ENCODE measurements at regions of chr19 and their contacts with region 1.

Region 1: DNA sequence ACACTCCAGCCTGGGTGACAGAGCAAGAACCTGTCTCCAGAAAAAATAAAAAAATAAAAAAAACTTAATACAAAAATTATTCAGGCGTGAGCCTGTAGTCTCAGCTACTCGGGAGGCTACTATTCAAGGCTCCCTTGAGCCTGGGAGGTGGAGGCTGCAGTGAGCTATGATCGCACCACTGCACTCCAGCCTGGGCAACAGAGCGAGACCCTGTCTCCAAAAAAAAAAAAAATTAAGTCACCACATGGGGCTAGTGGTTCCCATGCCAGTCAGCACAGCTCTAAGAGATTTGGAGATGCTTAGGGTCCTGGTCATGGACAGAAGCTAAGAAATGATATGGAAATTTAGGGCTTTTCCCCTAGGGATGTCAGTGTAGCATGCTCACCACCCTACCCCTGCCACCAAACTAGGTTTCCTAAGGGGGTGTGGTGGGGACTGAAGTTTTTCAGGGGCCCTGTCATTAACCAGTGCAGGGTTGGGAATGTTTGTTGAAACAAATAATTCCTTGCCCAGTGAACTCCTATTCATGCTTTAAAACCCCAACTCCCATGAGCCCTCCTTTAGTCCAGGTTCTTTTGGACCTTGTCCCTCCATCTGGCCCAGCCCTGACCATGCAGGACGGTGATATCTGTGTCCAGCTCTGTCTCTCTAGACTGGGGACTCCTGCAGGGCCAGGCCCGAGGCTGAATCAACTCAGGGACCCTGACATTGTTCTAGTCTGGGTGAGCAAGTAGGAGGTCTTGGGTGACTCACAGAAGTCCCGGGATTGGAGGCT is 1.8 kb downstream of the FCHO1 start:
- DNase-seq: no peak
- ATAC-seq: no peak
- H3K4me3 ChIP-seq: no peak overlapping the region
- H3K27ac ChIP-seq: no peak overlapping the region
- H3K4me1 ChIP-seq: peaks cover 8% of the 10 kb centered on the region
- H3K27me3 ChIP-seq: no peaks in the 10 kb centered on the region
- CTCF ChIP-seq: no peak

Region 2: GRCh38 chr19:17725422-17726078 is 27.5 kb before region 1 on chr19:
- CTCF ChIA-PET with region 1: interaction called, 10 read pairs
- POLR2A ChIA-PET with region 1: no interaction called
- in situ Hi-C with region 1: no loop called
- intact Hi-C with region 1: no loop called
- DNase-seq: no peak
- ATAC-seq: no peak
- H3K4me3 ChIP-seq: no peak overlapping the region
- H3K27ac ChIP-seq: no peak overlapping the region
- H3K4me1 ChIP-seq: peaks cover 6% of the 10 kb centered on the region
- H3K27me3 ChIP-seq: no peaks in the 10 kb centered on the region
- CTCF ChIP-seq: peak; percentile 73